Endothelial cell of umbilical vein (primary cell): ENCODE measurements at regions of chr3 and their contacts with region 1.

Region 1: DNA sequence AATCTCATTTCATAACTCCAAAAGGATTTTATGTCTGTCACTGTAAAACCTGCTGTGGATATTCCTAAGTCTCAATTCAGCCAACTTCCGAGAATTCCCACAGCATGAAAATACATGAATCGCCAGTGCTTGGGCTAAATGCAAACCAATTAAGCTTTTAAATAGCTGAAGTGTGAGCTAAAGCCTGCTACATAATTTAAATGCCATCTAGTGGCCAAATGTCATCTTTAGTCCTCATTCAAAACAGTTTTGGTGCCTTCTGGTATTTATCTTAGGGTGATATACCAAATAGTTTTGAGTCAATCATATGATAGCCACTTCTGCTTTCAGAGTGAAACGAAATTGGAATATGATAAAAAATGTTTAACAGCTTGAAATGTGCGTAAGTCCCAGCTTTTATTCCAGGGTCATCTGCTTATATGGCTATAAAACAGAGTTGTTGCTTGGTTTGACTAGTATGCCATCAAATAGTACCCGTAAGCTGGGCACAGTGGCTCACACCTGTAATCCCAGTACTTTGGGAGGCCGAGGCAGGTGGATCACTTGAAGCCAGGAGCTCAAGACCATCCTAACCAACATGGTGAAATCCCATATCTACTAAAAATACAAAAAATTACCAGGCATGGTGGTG is 41.8 kb upstream of the CCNL1 start:
- DNase-seq: peak; percentile 63
- H3K4me3 ChIP-seq: no peak overlapping the region
- H3K27ac ChIP-seq: no peak overlapping the region
- H3K4me1 ChIP-seq: peaks cover 14% of the 10 kb centered on the region
- H3K27me3 ChIP-seq: no peaks in the 10 kb centered on the region
- CTCF ChIP-seq: peak; percentile 40 to 41
- POLR2A ChIP-seq: no peak

Region 2: DNA sequence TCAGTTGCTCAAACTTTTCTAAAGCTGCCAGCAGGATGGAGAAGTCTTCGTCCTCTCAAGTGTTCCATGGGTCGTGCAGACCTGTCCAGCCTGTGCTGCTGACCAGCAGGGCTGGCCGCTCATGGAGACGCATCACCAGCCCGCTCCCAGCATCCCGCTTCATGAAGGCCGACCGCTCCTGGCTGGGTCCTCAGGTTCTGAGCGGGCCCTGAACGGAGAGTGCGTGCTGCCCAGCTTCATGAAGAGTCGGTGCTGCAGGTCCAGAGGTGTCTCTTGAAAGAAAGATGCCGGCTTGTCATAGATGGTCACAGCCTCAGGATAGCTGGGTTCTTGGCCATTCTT is 1157.2 kb before region 1 on chr3:
- CTCF ChIA-PET with region 1: interaction called, 14 read pairs
- POLR2A ChIA-PET with region 1: no interaction called
- dilution Hi-C with region 1: no loop called
- intact Hi-C with region 1: no loop called
- DNase-seq: no peak
- H3K4me3 ChIP-seq: no peak overlapping the region
- H3K27ac ChIP-seq: no peak overlapping the region
- H3K4me1 ChIP-seq: no peaks in the 10 kb centered on the region
- H3K27me3 ChIP-seq: no peaks in the 10 kb centered on the region
- CTCF ChIP-seq: no peak
- POLR2A ChIP-seq: no peak

Region 3: DNA sequence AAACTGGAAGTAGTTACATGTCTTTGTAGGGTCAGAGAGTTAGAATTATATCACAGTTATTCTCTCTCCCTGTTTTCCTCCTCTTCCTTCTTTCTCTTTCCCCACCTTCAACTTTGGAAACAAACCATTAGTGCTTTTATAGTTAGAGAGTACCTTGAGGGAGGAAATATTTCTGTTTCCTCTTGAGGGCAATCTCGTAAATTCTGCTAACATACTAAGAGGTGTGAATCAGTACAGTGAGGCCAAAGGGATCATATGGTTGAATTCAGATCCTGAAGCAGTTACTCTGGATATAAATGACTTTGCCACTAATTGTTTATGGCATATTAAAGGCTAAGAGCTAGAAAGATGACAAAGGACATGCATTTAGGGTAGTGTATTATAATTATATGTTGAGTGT is 18.4 kb after region 1 on chr3:
- CTCF ChIA-PET with region 1: interaction called, 11 read pairs
- POLR2A ChIA-PET with region 1: no interaction called
- dilution Hi-C with region 1: no loop called
- intact Hi-C with region 1: no loop called
- DNase-seq: no peak
- H3K4me3 ChIP-seq: no peak overlapping the region
- H3K27ac ChIP-seq: no peak overlapping the region
- H3K4me1 ChIP-seq: no peaks in the 10 kb centered on the region
- H3K27me3 ChIP-seq: no peaks in the 10 kb centered on the region
- CTCF ChIP-seq: no peak
- POLR2A ChIP-seq: no peak

Region 4: GRCh38 chr3:157360044-157360443 is 158.3 kb after region 1 on chr3:
- CTCF ChIA-PET with region 1: interaction called, 52 read pairs
- POLR2A ChIA-PET with region 1: no interaction called
- dilution Hi-C with region 1: no loop called
- intact Hi-C with region 1: no loop called
- DNase-seq: peak; percentile 94
- H3K4me3 ChIP-seq: no peak overlapping the region
- H3K27ac ChIP-seq: peak overlapping the region; percentile 84
- H3K4me1 ChIP-seq: peaks cover 61% of the 10 kb centered on the region
- H3K27me3 ChIP-seq: no peaks in the 10 kb centered on the region
- CTCF ChIP-seq: no peak
- POLR2A ChIP-seq: peak; percentile 78

Region 5: DNA sequence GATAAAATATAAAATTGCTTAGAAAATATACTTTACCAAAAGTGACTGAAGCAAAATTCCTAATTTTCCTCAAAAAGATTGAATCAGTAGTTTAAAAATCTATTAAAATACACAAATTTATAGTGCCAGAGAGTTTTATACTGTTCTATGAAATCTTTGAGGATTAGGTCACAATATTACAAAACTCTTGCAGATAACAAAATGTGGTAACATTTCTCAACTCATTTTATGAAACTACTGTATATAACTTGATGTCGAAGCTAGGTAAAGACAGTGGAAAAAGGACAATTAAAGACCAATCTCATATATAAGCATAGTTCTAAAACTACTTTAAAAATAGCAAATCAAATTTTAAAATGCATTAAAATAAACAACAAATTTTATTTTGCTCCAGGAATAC is 285.6 kb after region 1 on chr3:
- CTCF ChIA-PET with region 1: interaction called, 97 read pairs
- POLR2A ChIA-PET with region 1: no interaction called
- dilution Hi-C with region 1: no loop called
- intact Hi-C with region 1: no loop called
- DNase-seq: no peak
- H3K4me3 ChIP-seq: no peak overlapping the region
- H3K27ac ChIP-seq: no peak overlapping the region
- H3K4me1 ChIP-seq: peaks cover 16% of the 10 kb centered on the region
- H3K27me3 ChIP-seq: no peaks in the 10 kb centered on the region
- CTCF ChIP-seq: no peak
- POLR2A ChIP-seq: no peak

Region 6: DNA sequence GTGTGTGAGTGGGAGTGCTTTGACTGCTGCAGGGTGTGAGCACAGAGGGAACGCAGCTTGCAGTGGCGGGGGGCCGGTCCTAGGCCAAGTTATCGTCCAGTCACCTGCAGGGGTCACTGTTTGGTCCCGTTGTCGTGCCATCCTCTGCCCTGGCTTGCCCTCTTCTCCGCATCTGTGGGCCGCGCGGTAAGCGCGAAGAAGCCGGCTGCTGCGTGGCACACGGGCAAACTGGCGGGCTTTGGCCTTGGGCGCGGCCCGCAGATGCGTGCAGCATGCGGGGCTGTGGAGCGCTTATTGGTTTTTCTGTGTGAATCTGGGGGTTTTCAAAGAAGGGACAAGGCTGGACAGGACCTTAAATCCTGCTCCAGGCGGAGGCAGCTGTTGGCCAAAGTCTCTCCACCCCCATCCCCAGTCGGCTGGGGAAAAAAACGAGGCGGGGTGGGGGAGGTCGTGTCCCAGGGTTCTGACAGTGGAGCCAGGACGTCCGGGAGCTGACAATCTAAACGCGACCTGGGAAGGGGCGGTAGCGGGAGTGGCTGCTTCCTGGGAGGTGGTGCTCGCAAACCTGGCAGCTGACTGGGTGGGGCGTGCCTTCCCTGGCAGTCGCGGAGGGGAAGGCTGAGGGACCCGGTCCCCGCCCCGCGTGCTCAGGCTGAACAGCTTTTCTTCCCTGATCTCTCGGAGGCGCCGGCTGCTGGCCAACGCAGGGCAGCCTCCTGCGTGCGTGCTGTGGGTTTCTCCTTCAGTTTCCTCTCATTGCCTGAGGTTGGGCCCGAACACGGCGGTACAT is 341.1 kb after region 1 on chr3:
- CTCF ChIA-PET with region 1: interaction called, 15 read pairs
- POLR2A ChIA-PET with region 1: no interaction called
- dilution Hi-C with region 1: no loop called
- intact Hi-C with region 1: no loop called
- DNase-seq: peak; percentile 61
- H3K4me3 ChIP-seq: peak overlapping the region; percentile 31 to 60 (median 42)
- H3K27ac ChIP-seq: no peak overlapping the region
- H3K4me1 ChIP-seq: peaks cover 4% of the 10 kb centered on the region
- H3K27me3 ChIP-seq: no peaks in the 10 kb centered on the region
- CTCF ChIP-seq: peak; percentile 32 to 62
- POLR2A ChIP-seq: peak; percentile 34